CD8-positive, alpha-beta T cell (primary cell): ENCODE measurements at regions of chr1 and their contacts with region 1.

Region 1: GRCh38 chr1:212368073-212368484 is 46.6 kb downstream of the PACC1 start:
- DNase-seq: peak; percentile 16 to 78 (median 53)
- ATAC-seq: peak; percentile 92
- H3K4me3 ChIP-seq: no peak overlapping the region
- H3K4me3 Mint-ChIP-seq: no peak overlapping the region
- H3K27ac ChIP-seq: no peak overlapping the region
- H3K27ac Mint-ChIP-seq: peak overlapping the region; percentile 20
- H3K4me1 ChIP-seq: no peaks in the 10 kb centered on the region
- H3K4me1 Mint-ChIP-seq: no peaks in the 10 kb centered on the region
- H3K27me3 ChIP-seq: no peaks in the 10 kb centered on the region
- H3K27me3 Mint-ChIP-seq: no peaks in the 10 kb centered on the region
- CTCF ChIP-seq: peak; percentile 79

Region 2: GRCh38 chr1:212012034-212012740 is 355.9 kb before region 1 on chr1:
- CTCF ChIA-PET with region 1: interaction called, 3 read pairs
- POLR2A ChIA-PET with region 1: no interaction called
- intact Hi-C with region 1: loop called (anchors 2 kb)
- DNase-seq: peak; percentile 24 to 78 (median 61)
- ATAC-seq: peak; percentile 100
- H3K4me3 ChIP-seq: no peak overlapping the region
- H3K4me3 Mint-ChIP-seq: no peak overlapping the region
- H3K27ac ChIP-seq: no peak overlapping the region
- H3K27ac Mint-ChIP-seq: no peak overlapping the region
- H3K4me1 ChIP-seq: no peaks in the 10 kb centered on the region
- H3K4me1 Mint-ChIP-seq: peaks cover 2% of the 10 kb centered on the region
- H3K27me3 ChIP-seq: no peaks in the 10 kb centered on the region
- H3K27me3 Mint-ChIP-seq: no peaks in the 10 kb centered on the region
- CTCF ChIP-seq: peak; percentile 98

Region 3: DNA sequence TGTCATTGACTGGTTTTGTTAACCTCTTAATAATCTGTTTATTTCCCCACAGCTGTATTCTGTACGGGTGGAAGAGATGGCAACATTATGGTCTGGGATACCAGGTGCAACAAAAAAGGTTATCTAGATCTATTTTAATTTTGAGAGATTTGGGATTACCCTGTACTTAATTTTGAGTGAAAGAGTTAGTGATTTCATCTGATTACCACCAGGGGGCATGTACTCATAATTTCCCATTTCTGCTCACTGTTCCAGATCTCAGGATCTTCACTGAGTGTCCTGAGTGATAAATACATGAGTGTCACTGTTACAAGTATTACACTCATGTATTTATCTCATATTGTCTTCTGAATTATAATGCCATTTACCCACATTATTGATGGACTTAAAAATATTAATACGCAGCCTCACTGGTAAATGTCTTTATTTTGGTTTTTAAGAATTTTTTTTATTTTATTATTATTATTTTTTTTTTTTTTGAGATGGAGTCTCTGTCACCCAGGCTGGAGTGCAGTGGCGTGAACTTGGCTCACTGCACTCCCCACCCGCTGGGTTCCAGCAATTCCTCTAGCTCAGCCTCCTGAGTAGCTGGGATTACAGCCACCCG is 305.1 kb before region 1 on chr1:
- CTCF ChIA-PET with region 1: interaction called, 58 read pairs
- POLR2A ChIA-PET with region 1: interaction called, 3 read pairs
- intact Hi-C with region 1: loop called (anchors 2 kb)
- DNase-seq: peak in 2 of 9 experiments; percentile 39 to 59
- ATAC-seq: peak; percentile 62
- H3K4me3 ChIP-seq: no peak overlapping the region
- H3K4me3 Mint-ChIP-seq: no peak overlapping the region
- H3K27ac ChIP-seq: no peak overlapping the region
- H3K27ac Mint-ChIP-seq: no peak overlapping the region
- H3K4me1 ChIP-seq: no peaks in the 10 kb centered on the region
- H3K4me1 Mint-ChIP-seq: no peaks in the 10 kb centered on the region
- H3K27me3 ChIP-seq: no peaks in the 10 kb centered on the region
- H3K27me3 Mint-ChIP-seq: no peaks in the 10 kb centered on the region
- CTCF ChIP-seq: peak; percentile 74

Region 4: DNA sequence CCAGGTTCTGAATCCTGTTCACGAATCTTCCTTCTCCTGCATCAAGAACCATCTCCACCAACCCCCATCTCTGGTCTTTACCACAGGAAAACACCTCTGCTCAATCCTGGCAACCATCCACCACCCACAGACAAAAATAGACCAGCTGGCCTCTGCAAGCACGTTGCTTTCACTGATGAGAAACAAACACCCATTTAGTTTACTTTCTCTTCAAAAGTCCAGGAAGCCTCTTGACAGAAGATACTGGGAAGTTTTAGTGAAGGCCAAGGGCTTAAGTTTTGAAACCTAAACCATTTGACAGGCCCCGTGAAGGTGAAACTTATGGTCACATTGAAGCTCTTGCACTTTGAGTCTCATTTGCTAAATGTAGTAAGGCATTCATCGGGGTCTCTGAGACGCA is 205.4 kb before region 1 on chr1:
- CTCF ChIA-PET with region 1: no interaction called
- POLR2A ChIA-PET with region 1: no interaction called
- intact Hi-C with region 1: loop called in 1 of 2 experiments (anchors 10 kb)
- DNase-seq: peak in 7 of 9 experiments; percentile 11 to 58 (median 31)
- ATAC-seq: no peak
- H3K4me3 ChIP-seq: no peak overlapping the region
- H3K4me3 Mint-ChIP-seq: peak overlapping the region; percentile 0
- H3K27ac ChIP-seq: no peak overlapping the region
- H3K27ac Mint-ChIP-seq: no peak overlapping the region
- H3K4me1 ChIP-seq: peaks cover 24% of the 10 kb centered on the region
- H3K4me1 Mint-ChIP-seq: peaks cover 29% of the 10 kb centered on the region
- H3K27me3 ChIP-seq: no peaks in the 10 kb centered on the region
- H3K27me3 Mint-ChIP-seq: no peaks in the 10 kb centered on the region
- CTCF ChIP-seq: no peak

Region 5: DNA sequence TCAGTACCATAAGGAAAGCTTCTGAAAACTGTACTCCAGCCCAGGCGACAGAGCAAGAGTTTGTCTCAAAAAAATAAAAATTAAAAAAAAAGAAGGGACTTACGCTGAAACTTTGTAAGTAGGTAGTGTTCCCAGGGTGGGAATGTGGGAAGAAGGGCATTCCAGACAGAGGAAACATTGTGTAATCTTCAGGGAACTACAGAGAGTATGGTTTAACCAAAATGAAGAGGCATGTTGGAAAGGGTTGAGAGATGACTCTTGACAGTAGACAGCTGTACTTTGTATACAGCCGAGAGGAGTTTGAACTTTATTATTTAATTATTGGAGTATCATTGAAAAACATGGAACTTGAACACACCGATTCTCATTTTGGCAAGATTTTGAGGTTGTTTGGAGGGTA is 39.8 kb before region 1 on chr1:
- CTCF ChIA-PET with region 1: no interaction called
- POLR2A ChIA-PET with region 1: no interaction called
- intact Hi-C with region 1: no loop called
- DNase-seq: no peak
- ATAC-seq: no peak
- H3K4me3 ChIP-seq: no peak overlapping the region
- H3K4me3 Mint-ChIP-seq: no peak overlapping the region
- H3K27ac ChIP-seq: no peak overlapping the region
- H3K27ac Mint-ChIP-seq: no peak overlapping the region
- H3K4me1 ChIP-seq: peaks cover 7% of the 10 kb centered on the region
- H3K4me1 Mint-ChIP-seq: peaks cover 35% of the 10 kb centered on the region
- H3K27me3 ChIP-seq: no peaks in the 10 kb centered on the region
- H3K27me3 Mint-ChIP-seq: no peaks in the 10 kb centered on the region
- CTCF ChIP-seq: no peak